ENCODE measurements at regions of chr3 and their contacts with region 1.

Region 1: GRCh38 chr3:112293368-112294321 is at the start of gene SLC9C1:
- DNase-seq: peak; percentile 79
- ATAC-seq: peak; percentile 67
- H3K4me3 ChIP-seq: peak within 1 kb of the TSS; percentile 25 to 53 (median 41)
- H3K4me3 Mint-ChIP-seq: peak within 1 kb of the TSS; percentile 81
- H3K27ac ChIP-seq: peak within 1 kb of the TSS; percentile 30 to 45
- H3K27ac Mint-ChIP-seq: peak within 1 kb of the TSS; percentile 78
- H3K4me1 ChIP-seq: peaks cover 20 to 21% of the 10 kb centered on the region in 2 donors
- H3K4me1 Mint-ChIP-seq: peaks cover 30% of the 10 kb centered on the region
- H3K27me3 ChIP-seq: no peaks in the 10 kb centered on the region
- H3K27me3 Mint-ChIP-seq: no peaks in the 10 kb centered on the region
- CTCF ChIP-seq: peak; percentile 68
- total RNA-seq, gene SLC9C1: 0.41 and 0.49 TPM in 2 replicates

Region 2: DNA sequence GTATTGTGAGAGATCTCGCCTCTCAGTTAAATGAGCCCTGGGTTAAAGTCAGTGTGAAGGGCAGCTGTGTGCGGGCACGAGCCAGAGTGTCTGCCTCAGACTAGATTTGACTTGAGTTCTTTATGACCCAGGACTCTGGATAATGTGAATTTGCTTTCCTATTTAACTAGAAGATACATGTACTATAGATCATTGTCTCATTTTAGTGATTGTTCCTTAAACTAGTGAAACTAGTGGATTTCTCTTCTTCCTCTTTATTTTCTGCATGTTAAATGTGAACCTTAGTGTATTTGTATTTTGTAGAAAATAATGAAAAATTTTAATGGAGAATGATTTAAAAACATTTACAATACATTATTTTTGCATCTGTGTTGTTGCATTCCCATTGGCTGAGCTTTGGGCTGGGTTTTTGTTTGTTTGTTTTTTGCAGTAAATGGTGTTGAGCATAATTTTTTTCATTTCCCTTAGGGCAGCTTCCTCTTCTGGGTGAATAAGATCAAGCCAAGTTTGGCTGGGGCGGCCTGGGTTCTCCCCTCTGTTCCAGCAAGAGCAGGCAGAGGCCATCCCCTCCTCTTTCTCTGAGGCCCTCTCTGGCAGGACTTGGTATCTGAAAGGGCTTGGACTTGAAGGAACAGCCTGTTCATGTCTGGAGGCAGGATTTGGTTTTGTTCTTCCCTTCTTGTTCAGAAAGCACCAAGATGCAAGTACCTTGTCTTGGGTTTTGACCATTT is 175.6 kb before region 1 on chr3:
- CTCF ChIA-PET with region 1: interaction called, 16 read pairs
- POLR2A ChIA-PET with region 1: interaction called, 5 read pairs
- intact Hi-C with region 1: no loop called
- DNase-seq: peak; percentile 82
- ATAC-seq: peak; percentile 62
- H3K4me3 ChIP-seq: peak overlapping the region in 1 of 5 experiments; percentile 18
- H3K4me3 Mint-ChIP-seq: peak overlapping the region; percentile 79
- H3K27ac ChIP-seq: peak overlapping the region; percentile 67 to 78
- H3K27ac Mint-ChIP-seq: peak overlapping the region; percentile 86
- H3K4me1 ChIP-seq: peaks cover 94 to 95% of the 10 kb centered on the region in 2 donors
- H3K4me1 Mint-ChIP-seq: peaks cover 89% of the 10 kb centered on the region
- H3K27me3 ChIP-seq: no peaks in the 10 kb centered on the region
- H3K27me3 Mint-ChIP-seq: no peaks in the 10 kb centered on the region
- CTCF ChIP-seq: peak; percentile 40

Region 3: GRCh38 chr3:112280266-112280665 is 13.4 kb before region 1 on chr3:
- CTCF ChIA-PET with region 1: interaction called, 13 read pairs
- POLR2A ChIA-PET with region 1: no interaction called
- intact Hi-C with region 1: no loop called
- DNase-seq: no peak
- ATAC-seq: no peak
- H3K4me3 ChIP-seq: no peak overlapping the region
- H3K4me3 Mint-ChIP-seq: no peak overlapping the region
- H3K27ac ChIP-seq: no peak overlapping the region
- H3K27ac Mint-ChIP-seq: no peak overlapping the region
- H3K4me1 ChIP-seq: no peaks in the 10 kb centered on the region
- H3K4me1 Mint-ChIP-seq: no peaks in the 10 kb centered on the region
- H3K27me3 ChIP-seq: no peaks in the 10 kb centered on the region
- H3K27me3 Mint-ChIP-seq: no peaks in the 10 kb centered on the region
- CTCF ChIP-seq: no peak

Region 4: DNA sequence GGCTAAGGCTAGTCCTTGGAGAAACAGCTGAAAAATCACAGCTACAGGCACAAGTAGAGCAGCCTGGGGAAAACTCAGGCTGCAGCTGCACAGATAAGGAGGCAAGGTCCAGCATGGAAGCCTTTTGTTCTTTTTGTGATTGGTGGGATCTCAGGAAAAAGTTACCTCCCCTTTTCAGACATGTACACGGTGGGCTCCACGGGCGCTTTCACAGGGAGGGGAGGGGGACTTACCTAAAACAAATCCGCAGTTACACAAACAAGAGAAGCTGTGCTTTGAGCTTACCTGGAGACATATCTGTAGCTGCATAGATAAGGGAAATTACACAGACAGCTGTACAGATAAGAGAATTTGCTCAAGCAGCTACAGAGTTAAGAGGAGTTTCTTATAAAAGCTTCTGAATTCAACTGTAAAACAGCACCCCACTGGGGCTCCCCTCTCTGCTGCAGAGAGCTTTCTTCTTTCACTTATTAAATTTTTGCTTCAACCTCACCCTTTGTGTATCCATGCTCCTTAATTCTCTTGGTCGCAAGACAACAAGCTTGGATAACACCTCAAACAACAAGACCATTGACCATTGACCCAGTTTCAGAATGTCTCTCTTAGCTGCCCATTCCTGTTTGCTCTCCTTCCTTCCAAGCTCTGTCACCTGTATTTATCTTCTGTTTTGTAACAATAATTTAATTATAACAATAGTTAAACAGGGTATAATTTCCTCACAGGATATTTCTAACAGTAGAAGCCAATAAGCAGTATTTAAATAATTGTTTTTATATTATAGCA is 28.4 kb after region 1 on chr3:
- CTCF ChIA-PET with region 1: interaction called, 27 read pairs
- POLR2A ChIA-PET with region 1: no interaction called
- intact Hi-C with region 1: loop called (anchors 1 kb)
- DNase-seq: no peak
- ATAC-seq: no peak
- H3K4me3 ChIP-seq: no peak overlapping the region
- H3K4me3 Mint-ChIP-seq: no peak overlapping the region
- H3K27ac ChIP-seq: no peak overlapping the region
- H3K27ac Mint-ChIP-seq: no peak overlapping the region
- H3K4me1 ChIP-seq: no peaks in the 10 kb centered on the region
- H3K4me1 Mint-ChIP-seq: no peaks in the 10 kb centered on the region
- H3K27me3 ChIP-seq: no peaks in the 10 kb centered on the region
- H3K27me3 Mint-ChIP-seq: no peaks in the 10 kb centered on the region
- CTCF ChIP-seq: no peak

Region 5: GRCh38 chr3:112437146-112438022 is 143.7 kb after region 1 on chr3:
- CTCF ChIA-PET with region 1: interaction called, 10 read pairs
- POLR2A ChIA-PET with region 1: no interaction called
- intact Hi-C with region 1: no loop called
- DNase-seq: peak; percentile 36
- ATAC-seq: peak; percentile 66
- H3K4me3 ChIP-seq: no peak overlapping the region
- H3K4me3 Mint-ChIP-seq: peak overlapping the region; percentile 5
- H3K27ac ChIP-seq: no peak overlapping the region
- H3K27ac Mint-ChIP-seq: no peak overlapping the region
- H3K4me1 ChIP-seq: peaks cover 12 to 14% of the 10 kb centered on the region in 2 donors
- H3K4me1 Mint-ChIP-seq: peaks cover 56% of the 10 kb centered on the region
- H3K27me3 ChIP-seq: no peaks in the 10 kb centered on the region
- H3K27me3 Mint-ChIP-seq: no peaks in the 10 kb centered on the region
- CTCF ChIP-seq: no peak

Region 6: DNA sequence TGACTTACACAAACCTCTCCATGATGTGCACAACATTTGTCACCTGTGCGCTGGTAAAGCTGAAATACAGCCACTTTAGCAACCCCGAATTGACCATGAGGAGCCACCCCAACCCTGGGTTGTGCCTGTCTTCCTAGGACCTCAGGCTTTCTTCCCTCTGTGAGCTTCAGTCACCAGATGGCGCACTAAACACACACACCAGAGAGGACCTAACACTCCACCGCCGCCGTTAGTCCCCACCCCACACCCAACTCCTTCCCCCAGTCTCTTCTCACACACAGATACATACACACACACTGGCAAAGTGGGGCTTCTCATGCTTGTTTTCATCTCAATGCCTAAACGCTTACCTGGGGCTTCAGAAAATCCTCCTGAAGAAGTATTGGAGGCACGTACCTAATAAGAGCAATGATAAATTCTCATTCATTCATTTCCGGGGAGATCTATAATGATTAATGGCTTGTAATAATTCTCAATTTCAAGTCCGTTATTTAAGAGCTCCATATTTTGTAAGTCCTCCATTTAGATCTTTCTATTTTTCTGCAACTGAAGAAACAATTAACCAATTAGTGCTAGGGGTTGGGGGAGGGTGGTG is 349.4 kb after region 1 on chr3:
- CTCF ChIA-PET with region 1: interaction called, 11 read pairs
- POLR2A ChIA-PET with region 1: no interaction called
- intact Hi-C with region 1: no loop called
- DNase-seq: peak; percentile 84
- ATAC-seq: peak; percentile 97
- H3K4me3 ChIP-seq: peak overlapping the region in 1 of 5 experiments; percentile 1
- H3K4me3 Mint-ChIP-seq: peak overlapping the region; percentile 66
- H3K27ac ChIP-seq: no peak overlapping the region
- H3K27ac Mint-ChIP-seq: no peak overlapping the region
- H3K4me1 ChIP-seq: peaks cover 0 to 9% of the 10 kb centered on the region in 2 donors
- H3K4me1 Mint-ChIP-seq: peaks cover 8% of the 10 kb centered on the region
- H3K27me3 ChIP-seq: peaks cover 0 to 12% (median 2%) of the 10 kb centered on the region in 4 experiments
- H3K27me3 Mint-ChIP-seq: peaks cover 4% of the 10 kb centered on the region
- CTCF ChIP-seq: peak; percentile 80